Caco-2 (cell line): ENCODE measurements at regions of chr11 and their contacts with region 1.

Region 1: GRCh38 chr11:134819041-134819440 is 407.0 kb upstream of the B3GAT1 start:
- DNase-seq: peak; percentile 54 to 73
- H3K4me3 ChIP-seq: no peak overlapping the region
- H3K4me3 Mint-ChIP-seq: peak overlapping the region; percentile 59
- H3K27ac Mint-ChIP-seq: peak overlapping the region; percentile 98
- H3K4me1 ChIP-seq: peaks cover 55% of the 10 kb centered on the region
- H3K4me1 Mint-ChIP-seq: peaks cover 58% of the 10 kb centered on the region
- H3K27me3 ChIP-seq: no peaks in the 10 kb centered on the region
- H3K27me3 Mint-ChIP-seq: no peaks in the 10 kb centered on the region
- CTCF ChIP-seq: peak; percentile 43 to 62

Region 2: DNA sequence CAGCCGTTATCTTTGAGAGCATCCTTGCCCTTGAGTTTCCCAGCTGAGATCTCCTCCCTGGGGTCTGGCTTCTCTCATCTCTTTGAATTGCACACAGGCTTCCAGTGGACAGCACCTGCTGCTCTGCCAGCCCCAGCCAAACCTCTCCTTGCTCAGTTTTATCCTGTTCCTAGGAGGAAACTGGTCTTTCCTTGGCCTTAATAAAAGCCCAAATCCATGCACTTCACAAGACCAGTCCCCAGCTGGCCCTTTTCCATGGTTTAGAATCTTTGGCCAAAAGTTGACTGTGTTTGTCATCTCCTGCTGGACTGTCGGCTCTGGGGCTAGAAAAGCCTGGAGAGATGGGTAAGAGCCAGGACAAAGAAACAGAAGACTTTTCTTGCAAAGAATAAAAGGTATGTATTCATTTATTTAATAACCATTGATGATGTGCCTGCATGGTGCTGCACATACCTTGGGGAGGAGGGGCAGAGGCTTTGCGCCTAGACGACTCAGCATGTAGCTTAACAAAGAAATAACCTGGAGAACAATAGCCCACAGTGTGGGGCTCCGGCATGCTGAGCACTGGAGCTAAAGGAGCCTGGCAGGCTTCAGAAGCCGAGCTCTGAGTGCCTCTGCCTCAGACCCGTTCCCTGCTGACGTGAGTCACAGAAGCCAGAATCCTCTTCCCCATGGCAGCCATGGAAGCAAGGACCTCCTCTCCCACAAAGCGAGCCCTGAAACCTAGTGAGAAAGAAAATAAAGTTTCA is 87.7 kb before region 1 on chr11:
- CTCF ChIA-PET with region 1: no interaction called
- POLR2A ChIA-PET with region 1: no interaction called
- intact Hi-C with region 1: no loop called
- DNase-seq: no peak
- H3K4me3 ChIP-seq: no peak overlapping the region
- H3K4me3 Mint-ChIP-seq: no peak overlapping the region
- H3K27ac Mint-ChIP-seq: no peak overlapping the region
- H3K4me1 ChIP-seq: peaks cover 23% of the 10 kb centered on the region
- H3K4me1 Mint-ChIP-seq: peaks cover 9% of the 10 kb centered on the region
- H3K27me3 ChIP-seq: no peaks in the 10 kb centered on the region
- H3K27me3 Mint-ChIP-seq: no peaks in the 10 kb centered on the region
- CTCF ChIP-seq: no peak

Region 3: DNA sequence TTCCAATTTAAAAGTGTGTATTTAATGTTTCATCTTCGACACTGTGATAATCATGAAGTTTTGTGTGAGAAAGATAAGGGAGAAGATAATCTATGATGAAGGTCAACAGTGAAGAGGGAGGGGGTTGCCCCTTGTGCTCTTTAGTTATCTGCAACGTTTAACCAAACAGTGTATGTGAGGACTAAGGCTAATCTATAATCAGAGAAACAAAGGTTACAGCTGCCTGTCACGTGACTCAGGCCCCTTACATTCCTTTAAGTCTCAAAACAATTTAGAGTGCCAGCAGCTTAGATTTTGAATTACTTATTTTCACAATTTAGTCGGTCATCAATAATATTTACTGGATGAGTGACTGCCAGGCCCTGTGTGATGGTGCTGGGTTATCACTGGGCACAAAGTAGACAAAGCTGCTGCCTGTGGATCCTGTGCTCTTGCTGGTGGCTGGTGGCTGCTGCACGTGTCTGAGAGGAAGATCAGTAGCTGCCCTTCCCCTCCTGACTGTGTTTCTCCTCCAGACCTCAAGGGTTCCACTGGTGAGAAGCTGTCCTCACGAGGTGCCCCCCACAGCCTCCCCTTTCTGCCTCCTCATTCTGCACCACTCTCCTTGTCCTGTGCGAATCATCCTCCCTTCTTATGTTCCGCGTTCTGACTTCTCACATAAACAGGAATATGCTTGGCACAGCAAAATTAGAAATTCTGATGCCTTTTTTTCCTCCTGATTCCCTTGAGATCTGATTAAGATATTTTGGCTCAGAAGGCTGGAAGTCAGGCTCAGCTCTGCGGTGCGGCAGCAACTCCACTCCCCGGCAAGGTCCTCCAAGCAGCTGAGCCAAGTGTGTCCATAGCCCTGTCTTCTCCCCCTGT is 75.9 kb before region 1 on chr11:
- CTCF ChIA-PET with region 1: no interaction called
- POLR2A ChIA-PET with region 1: no interaction called
- intact Hi-C with region 1: loop called (anchors 1 kb)
- DNase-seq: peak; percentile 83 to 87
- H3K4me3 ChIP-seq: no peak overlapping the region
- H3K4me3 Mint-ChIP-seq: peak overlapping the region; percentile 9
- H3K27ac Mint-ChIP-seq: no peak overlapping the region
- H3K4me1 ChIP-seq: peaks cover 64% of the 10 kb centered on the region
- H3K4me1 Mint-ChIP-seq: peaks cover 50% of the 10 kb centered on the region
- H3K27me3 ChIP-seq: no peaks in the 10 kb centered on the region
- H3K27me3 Mint-ChIP-seq: no peaks in the 10 kb centered on the region
- CTCF ChIP-seq: no peak

Region 4: DNA sequence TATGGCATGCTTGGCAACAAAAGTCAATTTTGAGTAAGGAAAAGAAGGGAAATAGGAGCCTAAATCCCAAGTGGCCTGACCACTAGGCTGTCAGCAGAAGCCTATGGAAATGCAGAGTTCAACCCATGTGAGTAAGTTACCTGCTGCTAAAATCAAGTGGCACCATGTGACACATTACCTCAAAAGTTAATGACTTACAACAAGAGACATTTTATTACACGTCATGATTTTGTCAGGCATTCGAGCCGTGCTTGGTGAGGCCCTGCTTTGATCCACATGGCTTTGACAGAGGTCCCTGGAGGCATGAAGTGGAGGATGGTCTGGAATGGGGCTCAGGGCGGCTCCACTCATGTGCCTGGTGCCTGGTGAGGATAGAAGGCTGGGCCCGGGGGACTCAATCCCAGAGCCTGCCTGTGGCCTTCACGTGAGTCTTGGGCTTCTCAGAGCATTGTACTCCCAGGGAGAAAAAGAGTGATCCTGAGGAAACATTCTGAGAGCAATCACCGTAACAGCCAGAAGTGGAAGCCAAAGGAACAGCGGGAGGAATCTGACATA is 67.9 kb before region 1 on chr11:
- CTCF ChIA-PET with region 1: no interaction called
- POLR2A ChIA-PET with region 1: no interaction called
- intact Hi-C with region 1: loop called (anchors 2 kb)
- DNase-seq: peak in 1 of 2 experiments; percentile 39
- H3K4me3 ChIP-seq: no peak overlapping the region
- H3K4me3 Mint-ChIP-seq: no peak overlapping the region
- H3K27ac Mint-ChIP-seq: peak overlapping the region; percentile 10
- H3K4me1 ChIP-seq: peaks cover 39% of the 10 kb centered on the region
- H3K4me1 Mint-ChIP-seq: peaks cover 37% of the 10 kb centered on the region
- H3K27me3 ChIP-seq: no peaks in the 10 kb centered on the region
- H3K27me3 Mint-ChIP-seq: no peaks in the 10 kb centered on the region
- CTCF ChIP-seq: no peak

Region 5: DNA sequence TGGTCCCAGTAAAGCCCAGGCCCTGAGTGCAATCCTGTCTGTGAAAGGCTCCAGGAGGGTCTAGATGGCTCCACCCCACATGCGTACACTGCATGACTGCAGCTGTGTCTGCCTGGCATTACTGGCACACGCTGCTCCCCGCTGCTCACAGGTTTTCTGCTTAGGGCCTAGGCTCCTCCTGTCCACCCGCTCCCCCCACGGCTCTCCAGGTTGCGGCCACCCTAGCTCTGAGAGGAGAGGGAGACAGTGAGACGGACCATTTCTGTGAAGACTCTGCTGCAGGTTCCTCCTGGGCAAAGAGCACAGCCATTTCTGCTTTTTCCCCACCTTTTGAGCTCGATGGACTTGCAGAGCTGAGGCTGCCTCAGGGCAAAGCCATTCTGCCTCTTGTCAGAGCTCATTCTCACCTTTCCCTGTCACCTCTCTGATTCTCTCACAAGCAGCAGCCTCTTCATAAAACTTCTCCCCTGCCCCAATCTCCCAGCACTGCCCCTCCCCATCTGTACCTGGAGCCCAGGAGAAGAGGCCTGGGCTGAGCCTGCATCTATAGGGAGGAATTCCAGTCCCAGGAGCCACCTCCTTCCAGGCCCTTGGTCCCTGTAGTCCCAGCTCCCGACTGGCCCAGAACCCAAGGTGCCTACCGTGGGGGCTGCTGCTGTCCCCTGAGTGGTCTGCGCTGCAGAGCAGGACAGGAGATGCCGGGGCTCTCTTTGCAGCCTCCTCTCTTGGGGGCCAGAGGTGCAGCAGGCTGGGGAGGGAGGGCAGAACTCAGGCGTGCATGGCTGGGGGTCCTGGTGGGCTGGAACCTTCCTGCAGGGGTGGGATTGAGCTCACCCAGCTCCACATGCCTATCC is 26.7 kb after region 1 on chr11:
- CTCF ChIA-PET with region 1: no interaction called
- POLR2A ChIA-PET with region 1: no interaction called
- intact Hi-C with region 1: loop called (anchors 2 kb)
- DNase-seq: no peak
- H3K4me3 ChIP-seq: no peak overlapping the region
- H3K4me3 Mint-ChIP-seq: no peak overlapping the region
- H3K27ac Mint-ChIP-seq: no peak overlapping the region
- H3K4me1 ChIP-seq: 0 out of 2 replicates have a peak, but pooled peaks cover 4% of the 10 kb centered on the region
- H3K4me1 Mint-ChIP-seq: no peaks in the 10 kb centered on the region
- H3K27me3 ChIP-seq: no peaks in the 10 kb centered on the region
- H3K27me3 Mint-ChIP-seq: no peaks in the 10 kb centered on the region
- CTCF ChIP-seq: no peak

Region 6: GRCh38 chr11:134861490-134862104 is 42.6 kb after region 1 on chr11:
- CTCF ChIA-PET with region 1: no interaction called
- POLR2A ChIA-PET with region 1: interaction called, 5 read pairs
- intact Hi-C with region 1: loop called (anchors 1 kb)
- DNase-seq: no peak
- H3K4me3 ChIP-seq: no peak overlapping the region
- H3K4me3 Mint-ChIP-seq: no peak overlapping the region
- H3K27ac Mint-ChIP-seq: peak overlapping the region; percentile 99
- H3K4me1 ChIP-seq: peaks cover 33% of the 10 kb centered on the region
- H3K4me1 Mint-ChIP-seq: peaks cover 40% of the 10 kb centered on the region
- H3K27me3 ChIP-seq: no peaks in the 10 kb centered on the region
- H3K27me3 Mint-ChIP-seq: no peaks in the 10 kb centered on the region
- CTCF ChIP-seq: peak; percentile 10 to 50

Region 7: DNA sequence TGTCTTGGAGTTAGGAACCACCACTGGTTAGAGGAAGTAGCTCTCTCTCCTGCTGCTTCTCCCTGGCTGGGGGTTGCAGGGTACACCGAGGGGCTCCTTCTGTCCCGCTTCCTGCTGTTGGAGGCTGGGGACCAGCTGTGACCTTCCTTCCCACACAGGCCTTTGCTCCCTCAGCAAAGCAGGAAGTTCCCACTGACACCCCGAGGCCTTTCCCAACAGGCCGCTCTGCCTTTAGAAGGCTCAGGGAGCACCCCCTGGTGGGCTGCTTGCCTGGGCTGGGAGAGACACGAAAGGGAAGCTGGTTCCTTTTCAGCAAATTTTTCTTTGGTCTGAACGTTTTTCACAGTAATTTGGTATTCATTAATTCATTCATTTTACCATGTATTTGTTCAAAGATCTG is 120.9 kb after region 1 on chr11:
- CTCF ChIA-PET with region 1: no interaction called
- POLR2A ChIA-PET with region 1: no interaction called
- intact Hi-C with region 1: loop called (anchors 2 kb)
- DNase-seq: peak; percentile 68 to 77
- H3K4me3 ChIP-seq: no peak overlapping the region
- H3K4me3 Mint-ChIP-seq: no peak overlapping the region
- H3K27ac Mint-ChIP-seq: no peak overlapping the region
- H3K4me1 ChIP-seq: no peaks in the 10 kb centered on the region
- H3K4me1 Mint-ChIP-seq: no peaks in the 10 kb centered on the region
- H3K27me3 ChIP-seq: no peaks in the 10 kb centered on the region; the same call in 1 of the 2 replicates
- H3K27me3 Mint-ChIP-seq: no peaks in the 10 kb centered on the region
- CTCF ChIP-seq: peak; percentile 58 to 83